PC-9 (cell line): ENCODE measurements at regions of chrX and their contacts with region 1.

Region 1: DNA sequence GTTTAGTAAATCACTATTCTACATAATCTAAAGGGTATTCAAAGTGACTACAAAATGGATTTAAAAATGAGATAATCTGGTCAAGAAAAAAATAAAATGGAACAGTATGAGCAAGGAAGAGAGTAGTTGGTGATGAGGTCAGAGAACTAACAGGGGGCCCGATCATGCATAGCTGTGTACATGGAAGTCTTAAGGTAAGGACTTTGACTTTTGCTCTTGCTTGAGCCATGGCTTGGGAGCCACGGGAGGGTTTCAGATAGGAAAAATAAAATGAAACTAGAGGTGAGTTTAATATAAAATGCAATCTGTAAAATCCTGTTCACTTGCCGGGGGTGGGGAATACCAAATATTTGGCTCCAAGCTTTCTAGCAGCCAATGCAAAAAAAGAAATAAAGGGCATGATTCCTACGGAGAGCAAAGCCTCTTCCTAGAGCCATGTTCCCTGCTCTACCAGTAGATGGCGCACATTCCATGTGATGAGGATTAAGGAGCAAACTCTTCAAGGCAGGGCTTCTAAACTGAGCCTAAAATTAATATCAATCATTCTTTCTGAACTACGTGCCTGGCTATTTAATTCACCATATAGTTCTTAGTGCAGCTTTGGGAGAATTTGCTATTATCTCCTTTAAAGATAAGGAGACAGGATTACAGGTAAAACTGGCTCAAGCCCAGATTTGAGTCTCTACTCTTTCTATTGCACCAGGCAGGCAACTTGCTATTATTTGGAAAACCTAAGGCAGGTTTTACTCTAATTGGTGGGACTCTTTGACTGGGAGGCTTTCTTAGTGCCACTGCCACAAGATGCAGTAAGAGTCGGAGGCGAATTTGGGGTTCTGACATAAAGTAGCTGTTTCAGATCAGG is 6.8 kb upstream of the CLCN5 start:
- DNase-seq: no peak
- H3K4me3 ChIP-seq: no peak overlapping the region
- H3K27ac ChIP-seq: no peak overlapping the region
- H3K4me1 ChIP-seq: no peaks in the 10 kb centered on the region
- H3K27me3 ChIP-seq: no peaks in the 10 kb centered on the region
- CTCF ChIP-seq: peak; percentile 72

Region 2: DNA sequence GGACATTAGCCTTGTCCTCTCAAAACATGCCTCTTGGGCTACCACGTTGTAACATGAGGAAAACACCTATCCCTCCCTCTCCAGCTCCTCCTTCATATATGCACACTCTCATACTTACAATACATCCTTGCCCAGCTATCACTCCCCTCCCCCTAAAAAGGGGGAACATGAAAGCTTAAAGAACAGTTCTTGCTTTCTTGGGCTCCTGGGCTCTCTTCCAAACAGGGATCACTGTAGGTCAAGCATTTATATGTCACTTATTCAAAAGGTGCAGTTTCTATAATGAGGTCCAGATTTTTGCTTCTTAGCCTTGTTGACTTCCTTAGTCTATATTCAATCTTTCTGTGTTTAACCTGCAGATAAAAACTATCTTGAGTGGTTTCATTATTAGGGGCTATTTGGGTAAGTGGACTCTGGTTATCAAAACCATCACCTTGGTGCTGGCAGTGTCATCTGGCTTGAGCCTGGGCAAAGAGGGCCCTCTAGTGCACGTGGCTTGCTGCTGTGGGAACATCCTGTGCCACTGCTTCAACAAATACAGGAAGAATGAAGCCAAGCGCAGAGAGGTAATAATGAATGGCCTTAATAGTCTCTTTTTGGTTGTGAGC is 165.8 kb after region 1 on chrX:
- CTCF ChIA-PET with region 1: no interaction called
- POLR2A ChIA-PET with region 1: no interaction called
- intact Hi-C with region 1: loop called (anchors 10 kb)
- DNase-seq: no peak
- H3K4me3 ChIP-seq: no peak overlapping the region
- H3K27ac ChIP-seq: no peak overlapping the region
- H3K4me1 ChIP-seq: no peaks in the 10 kb centered on the region
- H3K27me3 ChIP-seq: no peaks in the 10 kb centered on the region
- CTCF ChIP-seq: peak; percentile 37; the same call in 1 of the 2 replicates

Region 3: DNA sequence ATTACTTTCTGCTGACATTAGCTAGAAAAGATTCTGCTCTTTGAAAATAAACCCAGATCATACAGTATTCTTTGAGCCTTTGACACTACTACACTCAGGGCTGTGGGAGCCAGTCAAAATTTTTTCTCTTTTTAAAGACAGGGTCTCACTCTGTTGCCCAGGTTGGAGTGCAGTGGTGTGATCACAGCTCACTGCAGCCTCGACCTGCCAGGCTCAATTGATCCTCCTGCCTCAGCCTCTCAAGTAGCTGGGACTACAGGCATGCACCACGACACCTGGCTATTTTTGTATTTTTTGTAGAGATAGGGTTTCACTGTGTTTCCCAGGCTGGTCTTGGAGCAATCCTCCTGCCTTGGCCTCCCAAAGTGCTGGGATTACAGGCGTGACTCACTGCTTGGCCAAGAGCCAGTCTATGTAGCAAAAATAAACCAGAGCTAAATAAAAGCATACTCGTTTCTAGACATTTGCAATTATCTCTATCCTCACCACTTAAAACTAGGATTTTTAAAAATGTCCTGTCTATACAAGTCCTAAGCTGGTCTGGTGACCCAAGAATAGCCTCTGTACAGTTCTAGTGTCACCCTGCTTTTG is 242.0 kb after region 1 on chrX:
- CTCF ChIA-PET with region 1: no interaction called
- POLR2A ChIA-PET with region 1: no interaction called
- intact Hi-C with region 1: no loop called
- DNase-seq: no peak
- H3K4me3 ChIP-seq: no peak overlapping the region
- H3K27ac ChIP-seq: no peak overlapping the region
- H3K4me1 ChIP-seq: no peaks in the 10 kb centered on the region
- H3K27me3 ChIP-seq: no peaks in the 10 kb centered on the region
- CTCF ChIP-seq: no peak

Region 4: GRCh38 chrX:50180073-50180940 is 264.7 kb after region 1 on chrX:
- CTCF ChIA-PET with region 1: no interaction called
- POLR2A ChIA-PET with region 1: no interaction called
- intact Hi-C with region 1: no loop called
- DNase-seq: no peak
- H3K4me3 ChIP-seq: no peak overlapping the region
- H3K27ac ChIP-seq: no peak overlapping the region
- H3K4me1 ChIP-seq: no peaks in the 10 kb centered on the region
- H3K27me3 ChIP-seq: no peaks in the 10 kb centered on the region
- CTCF ChIP-seq: no peak

Region 5: GRCh38 chrX:50204364-50204899 is 288.8 kb after region 1 on chrX and contains the start of gene CCNB3:
- CTCF ChIA-PET with region 1: no interaction called
- POLR2A ChIA-PET with region 1: no interaction called
- intact Hi-C with region 1: loop called (anchors 5 kb)
- DNase-seq: peak; percentile 33 to 35
- H3K4me3 ChIP-seq: peak within 1 kb of the TSS; percentile 18; the same call in 1 of the 2 replicates
- H3K27ac ChIP-seq: no peak within 1 kb of the TSS
- H3K4me1 ChIP-seq: no peaks in the 10 kb centered on the region
- H3K27me3 ChIP-seq: no peaks in the 10 kb centered on the region
- CTCF ChIP-seq: peak; percentile 63
- total RNA-seq, gene CCNB3: 0.15 and 0.24 TPM in 2 replicates

Region 6: DNA sequence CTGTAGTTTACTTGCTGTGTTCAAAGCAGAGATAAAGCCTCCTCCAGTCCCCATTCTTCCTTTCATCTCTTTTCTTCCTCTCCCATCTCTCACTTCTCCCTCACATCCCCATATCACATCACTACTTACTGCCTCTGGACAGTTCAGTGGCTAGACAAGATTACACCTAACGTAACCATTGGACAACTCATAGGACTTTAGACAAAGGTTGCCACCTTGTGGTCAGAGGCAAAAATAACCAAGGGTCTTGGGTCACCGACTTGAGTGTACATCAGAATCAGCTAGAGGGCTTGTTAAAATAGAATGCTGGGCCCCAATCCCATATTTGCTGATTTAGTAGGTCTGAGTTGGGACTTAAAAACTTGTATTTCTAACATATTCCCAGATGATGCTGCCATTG is 664.4 kb after region 1 on chrX:
- CTCF ChIA-PET with region 1: no interaction called
- POLR2A ChIA-PET with region 1: no interaction called
- intact Hi-C with region 1: loop called (anchors 5 kb)
- DNase-seq: peak; percentile 7 to 35
- H3K4me3 ChIP-seq: no peak overlapping the region
- H3K27ac ChIP-seq: no peak overlapping the region
- H3K4me1 ChIP-seq: no peaks in the 10 kb centered on the region
- H3K27me3 ChIP-seq: no peaks in the 10 kb centered on the region
- CTCF ChIP-seq: peak; percentile 44; the same call in 1 of the 2 replicates